ENCODE measurements at regions of chr22 and their contacts with region 1.

Region 1: GRCh38 chr22:47136050-47136449 is 373.6 kb downstream of the TBC1D22A start:
- DNase-seq: no peak
- H3K4me3 ChIP-seq: no peak overlapping the region
- H3K27ac ChIP-seq: no peak overlapping the region
- H3K4me1 ChIP-seq: no peaks in the 10 kb centered on the region
- H3K27me3 ChIP-seq: no peaks in the 10 kb centered on the region
- CTCF ChIP-seq: no peak
- POLR2A ChIP-seq: no peak

Region 2: GRCh38 chr22:47163856-47164513 is 27.9 kb after region 1 on chr22:
- CTCF ChIA-PET with region 1: no interaction called
- POLR2A ChIA-PET with region 1: no interaction called
- dilution Hi-C with region 1: no loop called
- intact Hi-C with region 1: loop called (anchors 1 kb)
- DNase-seq: no peak
- H3K4me3 ChIP-seq: no peak overlapping the region
- H3K27ac ChIP-seq: peak overlapping the region; percentile 10
- H3K4me1 ChIP-seq: peaks cover 16% of the 10 kb centered on the region
- H3K27me3 ChIP-seq: no peaks in the 10 kb centered on the region
- CTCF ChIP-seq: no peak
- POLR2A ChIP-seq: no peak

Region 3: GRCh38 chr22:47247579-47248240 is 111.7 kb after region 1 on chr22:
- CTCF ChIA-PET with region 1: no interaction called
- POLR2A ChIA-PET with region 1: no interaction called
- dilution Hi-C with region 1: no loop called
- intact Hi-C with region 1: no loop called
- DNase-seq: no peak
- H3K4me3 ChIP-seq: no peak overlapping the region
- H3K27ac ChIP-seq: no peak overlapping the region
- H3K4me1 ChIP-seq: no peaks in the 10 kb centered on the region
- H3K27me3 ChIP-seq: no peaks in the 10 kb centered on the region
- CTCF ChIP-seq: no peak
- POLR2A ChIP-seq: no peak